Activated CD4-positive, alpha-beta T cell treated with anti-CD3 and anti-CD28 coated beads, Interleukin-2, amount 10 ng/mL, durations not matched to agents 24 days and 14 days (primary cell): ENCODE measurements at regions of chr16 and their contacts with region 1.

Region 1: GRCh38 chr16:70454222-70455034 is at the start of gene FCSK:
- DNase-seq: peak; percentile 90
- H3K4me3 Mint-ChIP-seq: peak within 1 kb of the TSS; percentile 85
- H3K27ac Mint-ChIP-seq: peak within 1 kb of the TSS; percentile 88
- H3K4me1 Mint-ChIP-seq: peaks cover 14% of the 10 kb centered on the region
- H3K27me3 Mint-ChIP-seq: peaks cover 1% of the 10 kb centered on the region
- total RNA-seq, gene FCSK: 19.6 and 24.4 TPM in 2 replicates

Region 2: DNA sequence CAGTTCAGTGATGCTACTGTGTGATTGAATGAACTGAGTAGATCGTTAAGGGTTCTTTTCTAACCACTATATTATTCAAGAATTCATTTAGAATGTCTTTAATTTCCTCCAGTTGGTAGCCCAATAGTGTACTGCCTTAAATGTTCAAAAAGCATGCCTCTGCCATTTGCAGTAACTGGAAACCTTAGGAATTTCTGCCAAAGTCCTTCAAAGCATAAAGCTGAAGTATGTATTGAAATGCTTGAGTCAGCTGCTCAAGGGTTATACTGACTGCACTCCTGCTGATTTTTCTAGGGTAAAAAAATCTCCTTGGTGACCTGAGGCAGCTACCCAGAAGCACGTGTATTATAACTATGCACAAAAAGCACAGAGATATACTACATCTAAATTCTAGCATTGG is 1210.9 kb before region 1 on chr16:
- intact Hi-C with region 1: no loop called
- DNase-seq: no peak
- H3K4me3 Mint-ChIP-seq: no peak overlapping the region
- H3K27ac Mint-ChIP-seq: no peak overlapping the region
- H3K4me1 Mint-ChIP-seq: peaks cover 2% of the 10 kb centered on the region
- H3K27me3 Mint-ChIP-seq: no peaks in the 10 kb centered on the region

Region 3: DNA sequence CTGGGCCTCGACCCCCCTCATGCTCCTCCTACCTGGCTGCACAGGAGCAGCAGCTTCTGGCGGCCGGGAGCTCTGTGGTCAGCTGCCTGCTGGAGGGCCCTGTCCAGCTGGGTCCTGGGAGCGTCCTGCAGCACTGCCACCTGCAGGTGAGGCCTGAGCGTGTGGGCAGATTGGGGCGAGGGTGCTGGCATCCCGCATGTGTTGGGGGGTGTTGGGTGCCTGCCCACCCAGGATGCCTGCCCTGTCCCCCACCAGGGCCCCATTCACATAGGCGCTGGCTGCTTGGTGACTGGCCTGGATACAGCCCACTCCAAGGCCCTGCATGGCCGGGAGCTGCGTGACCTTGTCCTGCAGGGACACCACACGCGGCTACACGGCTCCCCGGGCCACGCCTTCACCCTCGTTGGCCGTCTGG is 16.5 kb after region 1 on chr16:
- intact Hi-C with region 1: loop called (anchors 1 kb)
- DNase-seq: no peak
- H3K4me3 Mint-ChIP-seq: no peak overlapping the region
- H3K27ac Mint-ChIP-seq: no peak overlapping the region
- H3K4me1 Mint-ChIP-seq: peaks cover 2% of the 10 kb centered on the region
- H3K27me3 Mint-ChIP-seq: no peaks in the 10 kb centered on the region

Region 4: DNA sequence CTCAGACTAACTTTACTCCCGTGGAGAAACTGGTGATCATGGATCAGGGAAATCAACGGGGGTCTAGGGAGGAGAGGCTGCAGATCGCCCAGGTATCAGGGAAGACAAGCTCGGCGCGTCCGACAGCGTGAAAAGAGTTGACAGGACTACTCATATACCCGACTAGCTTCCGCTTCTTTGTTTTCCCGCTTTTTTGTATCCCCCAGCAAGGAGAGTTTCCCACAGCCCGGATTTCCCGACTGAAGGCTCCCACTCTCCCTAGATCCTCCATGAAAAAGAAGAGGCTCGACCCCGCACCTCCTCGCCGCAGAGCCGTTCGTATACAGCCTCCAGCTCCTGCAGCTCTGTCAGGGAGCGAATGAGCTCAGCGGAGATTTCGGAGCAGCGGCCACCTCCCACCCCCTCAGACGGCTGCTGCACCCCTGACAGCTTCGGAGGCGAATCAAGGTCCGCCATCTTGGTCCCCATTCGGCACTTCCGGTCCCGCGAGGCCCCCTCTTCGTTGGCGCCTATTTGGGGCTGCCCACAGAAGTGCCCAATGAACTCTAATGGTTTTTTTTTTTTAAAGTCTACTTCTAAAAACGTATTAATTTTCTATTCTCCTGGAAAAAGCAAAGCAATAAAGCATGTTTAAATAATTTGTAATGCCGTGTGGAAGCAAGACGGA is 68.8 kb after region 1 on chr16 and contains the start of gene COG4:
- intact Hi-C with region 1: no loop called
- DNase-seq: peak; percentile 97
- H3K4me3 Mint-ChIP-seq: peak within 1 kb of the TSS; percentile 92
- H3K27ac Mint-ChIP-seq: peak within 1 kb of the TSS; percentile 96
- H3K4me1 Mint-ChIP-seq: peaks cover 41% of the 10 kb centered on the region
- H3K27me3 Mint-ChIP-seq: no peaks in the 10 kb centered on the region
- total RNA-seq, gene COG4: 38.3 and 42.1 TPM in 2 replicates